ENCODE measurements at regions of chr10 and their contacts with region 1.

Region 1: GRCh38 chr10:63720072-63720537 is 198.9 kb downstream of the REEP3 start:
- DNase-seq: peak; percentile 47
- H3K4me3 Mint-ChIP-seq: no peak overlapping the region
- H3K27ac Mint-ChIP-seq: no peak overlapping the region
- H3K4me1 Mint-ChIP-seq: peaks cover 28% of the 10 kb centered on the region
- H3K27me3 Mint-ChIP-seq: peaks cover 8% of the 10 kb centered on the region

Region 2: GRCh38 chr10:63393050-63393449 is 327.1 kb before region 1 on chr10:
- CTCF ChIA-PET with region 1: no interaction called
- POLR2A ChIA-PET with region 1: no interaction called
- DNase-seq: no peak
- H3K4me3 Mint-ChIP-seq: no peak overlapping the region
- H3K27ac Mint-ChIP-seq: no peak overlapping the region
- H3K4me1 Mint-ChIP-seq: peaks cover 40% of the 10 kb centered on the region
- H3K27me3 Mint-ChIP-seq: no peaks in the 10 kb centered on the region

Region 3: DNA sequence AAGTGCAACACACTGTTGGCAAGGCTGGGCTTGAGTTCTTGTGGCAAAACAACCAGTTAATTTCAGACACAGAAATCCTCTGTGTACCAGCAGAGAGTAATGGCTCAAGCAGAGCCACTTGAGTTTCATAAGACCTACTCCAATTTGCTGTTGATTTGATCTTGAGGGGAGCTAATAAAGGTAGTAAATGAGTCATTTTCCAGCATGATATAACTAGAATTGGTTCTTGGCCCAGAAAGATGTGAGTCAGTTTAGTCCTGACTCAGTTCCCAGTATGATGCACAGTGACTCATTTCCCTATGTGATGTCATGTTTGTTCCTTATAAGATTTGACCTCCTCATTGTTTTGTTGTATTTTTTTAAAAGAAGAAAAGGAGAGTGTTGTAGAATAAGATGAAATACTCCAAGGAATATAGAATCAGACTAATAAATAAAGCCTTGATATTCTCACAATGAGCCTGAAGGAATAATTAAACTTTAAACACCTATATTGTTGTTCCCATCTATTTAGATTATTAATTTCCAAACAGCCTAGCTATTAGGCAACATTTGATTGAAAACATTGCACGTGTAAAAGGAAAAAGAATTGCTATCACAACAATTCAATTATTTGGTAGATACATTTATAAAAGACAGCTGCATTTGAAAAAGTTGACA is 12.7 kb before region 1 on chr10:
- CTCF ChIA-PET with region 1: interaction called, 10 read pairs
- POLR2A ChIA-PET with region 1: interaction called, 3 read pairs
- DNase-seq: peak; percentile 18
- H3K4me3 Mint-ChIP-seq: no peak overlapping the region
- H3K27ac Mint-ChIP-seq: peak overlapping the region; percentile 2
- H3K4me1 Mint-ChIP-seq: peaks cover 16% of the 10 kb centered on the region
- H3K27me3 Mint-ChIP-seq: no peaks in the 10 kb centered on the region

Region 4: GRCh38 chr10:63812501-63812900 is 92.4 kb after region 1 on chr10:
- CTCF ChIA-PET with region 1: no interaction called
- POLR2A ChIA-PET with region 1: no interaction called
- DNase-seq: no peak
- H3K4me3 Mint-ChIP-seq: no peak overlapping the region
- H3K27ac Mint-ChIP-seq: no peak overlapping the region
- H3K4me1 Mint-ChIP-seq: no peaks in the 10 kb centered on the region
- H3K27me3 Mint-ChIP-seq: peaks cover 7% of the 10 kb centered on the region

Measured in activated CD4-positive, alpha-beta memory T cell treated with anti-CD3 and anti-CD28 coated beads, Interleukin-2, amount 10 ng/mL, durations not matched to agents 7 days and 5 days (primary cell).